ENCODE measurements at regions of chr1 and their contacts with region 1.

Region 1: GRCh38 chr1:236523701-236524141 is at the start of gene LGALS8:
- DNase-seq: peak; percentile 80
- H3K4me3 Mint-ChIP-seq: peak within 1 kb of the TSS; percentile 98
- H3K27ac Mint-ChIP-seq: peak within 1 kb of the TSS; percentile 99
- H3K4me1 Mint-ChIP-seq: peaks cover 14% of the 10 kb centered on the region
- H3K27me3 Mint-ChIP-seq: peaks cover 18% of the 10 kb centered on the region
- total RNA-seq, gene LGALS8: 70.9 and 74.8 TPM in 2 replicates

Region 2: DNA sequence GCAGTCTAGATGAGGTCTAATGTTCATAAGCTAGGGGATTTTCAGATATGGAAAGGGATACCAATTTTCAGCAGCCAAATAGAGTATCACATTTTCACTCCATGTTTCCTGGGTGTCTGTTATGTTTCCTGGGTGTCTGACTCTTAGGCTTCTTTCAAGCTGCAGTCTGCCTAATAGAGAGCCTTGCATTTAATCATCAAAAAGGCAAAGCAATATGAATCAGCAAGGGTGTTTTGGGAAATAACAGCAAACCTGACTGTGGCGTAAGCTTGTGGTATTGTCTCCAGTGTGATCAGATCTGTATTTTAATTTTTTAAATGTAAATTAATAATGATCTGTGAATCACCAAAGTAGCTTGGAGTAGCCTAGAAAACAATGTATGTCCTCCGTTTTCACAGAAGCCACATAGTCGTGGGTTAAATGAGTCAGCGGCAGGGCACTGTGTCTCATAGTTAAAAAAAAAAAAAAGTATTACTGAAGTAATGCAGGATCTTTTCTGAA is 10.5 kb after region 1 on chr1:
- intact Hi-C with region 1: loop called (anchors 1 kb)
- DNase-seq: no peak
- H3K4me3 Mint-ChIP-seq: no peak overlapping the region
- H3K27ac Mint-ChIP-seq: peak overlapping the region; percentile 66
- H3K4me1 Mint-ChIP-seq: peaks cover 31% of the 10 kb centered on the region
- H3K27me3 Mint-ChIP-seq: no peaks in the 10 kb centered on the region